Naive thymus-derived CD4-positive, alpha-beta T cell (primary cell): ENCODE measurements at regions of chr14 and their contacts with region 1.

Region 1: DNA sequence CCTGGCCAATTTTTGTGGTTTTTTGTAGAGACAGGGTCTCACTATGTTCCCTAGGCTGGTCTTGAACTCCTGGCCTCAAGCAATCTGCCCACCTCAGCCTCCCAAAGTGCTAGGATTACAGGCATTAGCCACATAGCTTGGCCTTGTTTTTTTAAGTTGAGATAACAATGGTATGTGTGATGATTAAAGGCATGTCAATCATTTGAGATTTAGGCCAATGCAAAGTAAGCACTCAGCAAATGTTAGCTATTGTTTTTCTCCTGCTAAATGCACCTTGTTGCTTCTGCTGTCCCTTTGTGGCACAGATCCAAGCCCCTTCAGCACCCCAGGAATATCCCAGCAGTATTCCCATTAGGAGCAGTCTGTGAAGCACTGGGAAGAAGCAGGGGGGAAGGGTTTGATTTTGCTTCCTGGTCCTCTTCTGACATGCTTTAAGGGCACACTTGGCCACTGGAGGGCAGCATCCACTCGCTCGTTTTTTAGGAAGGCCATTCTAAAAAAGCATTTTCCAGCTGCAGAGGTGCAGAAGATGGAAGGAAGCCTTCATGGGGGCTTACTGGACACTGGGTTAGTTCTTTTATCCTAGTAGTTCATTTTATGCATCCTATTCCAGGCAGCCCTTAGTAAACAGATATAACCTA is 70.2 kb upstream of the ZFP36L1 start:
- DNase-seq: peak; percentile 33 to 66 (median 53)
- ATAC-seq: peak; percentile 68
- H3K4me3 ChIP-seq: no peak overlapping the region
- H3K4me3 Mint-ChIP-seq: no peak overlapping the region
- H3K27ac ChIP-seq: no peak overlapping the region
- H3K27ac Mint-ChIP-seq: peak overlapping the region in 2 of 9 donors; percentile 15 to 48
- H3K4me1 ChIP-seq: no peaks in the 10 kb centered on the region
- H3K4me1 Mint-ChIP-seq: peaks cover 0 to 2% (median 0%) of the 10 kb centered on the region in 7 donors
- H3K27me3 ChIP-seq: no peaks in the 10 kb centered on the region
- H3K27me3 Mint-ChIP-seq: no peaks in the 10 kb centered on the region

Region 2: DNA sequence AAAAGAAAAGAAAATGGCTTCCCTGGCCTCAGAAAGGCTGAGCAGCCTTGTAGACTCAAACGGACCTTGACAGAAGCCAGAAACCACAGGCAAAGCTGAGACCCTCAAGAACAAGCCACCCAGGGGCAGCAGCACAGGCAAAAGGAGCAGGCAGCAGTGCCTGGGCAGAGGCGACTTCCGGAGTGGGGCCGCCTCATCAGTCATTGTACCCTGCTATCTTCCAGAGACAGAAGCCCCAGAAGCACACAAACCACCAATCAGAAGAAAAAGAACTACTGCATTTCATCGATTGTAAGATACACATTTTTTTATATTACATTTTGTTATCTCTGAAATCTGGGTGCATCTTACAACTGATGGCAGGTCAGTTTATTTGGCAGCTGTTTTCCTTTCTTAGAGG is 12.0 kb before region 1 on chr14:
- CTCF ChIA-PET with region 1: no interaction called
- POLR2A ChIA-PET with region 1: no interaction called
- intact Hi-C with region 1: no loop called
- DNase-seq: no peak
- ATAC-seq: no peak
- H3K4me3 ChIP-seq: no peak overlapping the region
- H3K4me3 Mint-ChIP-seq: no peak overlapping the region
- H3K27ac ChIP-seq: no peak overlapping the region
- H3K27ac Mint-ChIP-seq: no peak overlapping the region
- H3K4me1 ChIP-seq: no peaks in the 10 kb centered on the region
- H3K4me1 Mint-ChIP-seq: peaks cover 0 to 12% (median 0%) of the 10 kb centered on the region in 7 donors
- H3K27me3 ChIP-seq: no peaks in the 10 kb centered on the region
- H3K27me3 Mint-ChIP-seq: no peaks in the 10 kb centered on the region

Region 3: DNA sequence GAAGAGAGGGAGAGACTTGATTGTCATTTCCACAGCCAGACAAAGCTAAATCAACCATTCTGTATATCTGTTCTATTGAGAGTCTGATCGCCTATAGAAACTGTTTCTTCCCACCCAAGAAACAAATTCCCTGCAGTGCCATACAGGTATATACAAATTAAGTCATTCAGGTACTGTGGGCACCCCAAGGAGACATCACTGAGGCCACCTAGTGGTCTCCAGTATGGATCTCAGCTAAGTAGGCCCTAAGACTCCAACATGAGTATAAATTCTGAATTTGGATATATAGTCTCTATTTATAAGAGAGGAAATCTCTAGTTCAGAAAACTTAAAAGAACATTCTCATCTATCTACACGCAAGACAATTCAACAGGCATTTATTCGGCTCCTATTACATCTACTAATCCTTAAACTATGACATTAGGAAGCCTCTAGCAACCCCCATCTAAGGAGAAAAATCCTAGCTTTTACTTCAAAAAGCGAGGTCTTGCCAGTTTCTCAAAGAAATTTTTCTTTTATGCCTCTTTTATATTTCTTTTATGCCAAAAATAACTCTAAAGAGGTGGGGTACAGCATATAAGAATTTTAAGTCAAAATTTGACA is 227.2 kb after region 1 on chr14:
- CTCF ChIA-PET with region 1: interaction called, 3 read pairs
- POLR2A ChIA-PET with region 1: no interaction called
- intact Hi-C with region 1: loop called (anchors 1 kb)
- DNase-seq: peak in 7 of 9 donors; percentile 22 to 47 (median 40)
- ATAC-seq: peak; percentile 74
- H3K4me3 ChIP-seq: no peak overlapping the region
- H3K4me3 Mint-ChIP-seq: no peak overlapping the region
- H3K27ac ChIP-seq: no peak overlapping the region
- H3K27ac Mint-ChIP-seq: peak overlapping the region in 1 of 9 donors; percentile 31
- H3K4me1 ChIP-seq: no peaks in the 10 kb centered on the region
- H3K4me1 Mint-ChIP-seq: peaks cover 6 to 21% (median 12%) of the 10 kb centered on the region in 7 donors
- H3K27me3 ChIP-seq: no peaks in the 10 kb centered on the region
- H3K27me3 Mint-ChIP-seq: no peaks in the 10 kb centered on the region

Region 4: GRCh38 chr14:69107407-69108003 is 244.4 kb after region 1 on chr14:
- CTCF ChIA-PET with region 1: interaction called, 24 read pairs
- POLR2A ChIA-PET with region 1: no interaction called
- intact Hi-C with region 1: loop called (anchors 1 kb)
- DNase-seq: peak in 7 of 9 donors; percentile 31 to 59 (median 47)
- ATAC-seq: peak; percentile 67
- H3K4me3 ChIP-seq: no peak overlapping the region
- H3K4me3 Mint-ChIP-seq: no peak overlapping the region
- H3K27ac ChIP-seq: no peak overlapping the region
- H3K27ac Mint-ChIP-seq: peak overlapping the region in 1 of 9 donors; percentile 29
- H3K4me1 ChIP-seq: no peaks in the 10 kb centered on the region
- H3K4me1 Mint-ChIP-seq: peaks cover 2 to 18% (median 6%) of the 10 kb centered on the region in 7 donors
- H3K27me3 ChIP-seq: no peaks in the 10 kb centered on the region
- H3K27me3 Mint-ChIP-seq: no peaks in the 10 kb centered on the region

Region 5: DNA sequence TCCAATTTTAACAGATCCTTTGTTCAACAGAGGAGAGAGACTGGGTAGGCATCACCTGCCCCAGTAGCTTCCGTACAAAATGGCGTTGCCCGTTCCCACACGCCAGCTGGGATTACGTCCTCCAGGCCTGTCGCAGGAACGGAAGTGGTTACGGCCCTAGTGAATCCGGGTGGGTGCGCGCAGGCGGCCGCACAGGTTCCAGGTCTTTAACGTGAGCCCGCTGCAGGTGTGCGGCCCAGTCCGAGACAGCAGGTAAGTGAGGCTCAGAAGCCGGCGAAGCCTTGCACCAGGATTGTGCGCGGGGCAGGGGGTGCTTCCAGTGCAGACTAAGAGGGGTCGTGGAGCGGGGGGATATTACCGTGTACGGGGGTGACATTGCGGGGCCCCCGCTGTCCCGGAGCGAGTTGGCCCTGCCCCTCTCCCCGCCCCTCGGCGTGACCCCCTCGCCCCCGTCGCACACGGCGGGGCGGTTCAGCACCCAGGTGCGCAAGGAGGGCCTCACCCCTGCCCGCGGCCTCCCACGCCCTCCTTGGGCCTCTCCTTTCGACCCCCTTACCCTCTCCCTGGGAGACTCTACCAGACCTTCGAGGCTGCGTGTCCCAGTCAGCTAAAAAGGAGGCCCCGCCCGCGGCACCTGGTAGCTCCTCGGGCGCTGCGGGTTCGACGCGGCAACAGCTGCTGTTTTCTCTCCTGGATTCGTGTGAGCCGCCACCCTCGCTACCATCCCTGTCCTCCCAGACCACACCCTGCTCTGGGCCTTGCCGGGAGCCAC is 328.5 kb after region 1 on chr14 and contains the start of gene EXD2:
- CTCF ChIA-PET with region 1: no interaction called
- POLR2A ChIA-PET with region 1: no interaction called
- intact Hi-C with region 1: loop called in 1 of 2 experiments (anchors 2 kb)
- DNase-seq: peak; percentile 27 to 68 (median 61)
- ATAC-seq: peak; percentile 81
- H3K4me3 ChIP-seq: peak within 1 kb of the TSS; percentile 71
- H3K4me3 Mint-ChIP-seq: peak within 1 kb of the TSS; percentile 91 to 97 (median 94)
- H3K27ac ChIP-seq: peak within 1 kb of the TSS; percentile 70
- H3K27ac Mint-ChIP-seq: peak within 1 kb of the TSS; percentile 80 to 96 (median 92)
- H3K4me1 ChIP-seq: peaks cover 0 to 6% of the 10 kb centered on the region in 2 donors
- H3K4me1 Mint-ChIP-seq: peaks cover 16 to 44% (median 38%) of the 10 kb centered on the region in 7 donors
- H3K27me3 ChIP-seq: no peaks in the 10 kb centered on the region
- H3K27me3 Mint-ChIP-seq: peaks cover 0 to 14% (median 0%) of the 10 kb centered on the region in 5 donors
- total RNA-seq, gene EXD2: 4.8 to 17.2 (median 10.6) TPM

Region 6: GRCh38 chr14:69204753-69205152 is 341.7 kb after region 1 on chr14:
- CTCF ChIA-PET with region 1: no interaction called
- POLR2A ChIA-PET with region 1: no interaction called
- intact Hi-C with region 1: no loop called
- DNase-seq: no peak
- ATAC-seq: no peak
- H3K4me3 ChIP-seq: no peak overlapping the region
- H3K4me3 Mint-ChIP-seq: no peak overlapping the region
- H3K27ac ChIP-seq: no peak overlapping the region
- H3K27ac Mint-ChIP-seq: peak overlapping the region in 1 of 9 donors; percentile 2
- H3K4me1 ChIP-seq: no peaks in the 10 kb centered on the region
- H3K4me1 Mint-ChIP-seq: peaks cover 0 to 6% (median 2%) of the 10 kb centered on the region in 7 donors
- H3K27me3 ChIP-seq: no peaks in the 10 kb centered on the region
- H3K27me3 Mint-ChIP-seq: no peaks in the 10 kb centered on the region

Region 7: GRCh38 chr14:69242311-69243224 is 379.5 kb after region 1 on chr14:
- CTCF ChIA-PET with region 1: no interaction called
- POLR2A ChIA-PET with region 1: no interaction called
- intact Hi-C with region 1: loop called in 1 of 2 experiments (anchors 2 kb)
- DNase-seq: peak in 7 of 9 donors; percentile 23 to 61 (median 49)
- ATAC-seq: peak; percentile 78
- H3K4me3 ChIP-seq: no peak overlapping the region
- H3K4me3 Mint-ChIP-seq: no peak overlapping the region
- H3K27ac ChIP-seq: no peak overlapping the region
- H3K27ac Mint-ChIP-seq: peak overlapping the region in 1 of 9 donors; percentile 59
- H3K4me1 ChIP-seq: no peaks in the 10 kb centered on the region
- H3K4me1 Mint-ChIP-seq: peaks cover 0 to 4% (median 0%) of the 10 kb centered on the region in 7 donors
- H3K27me3 ChIP-seq: no peaks in the 10 kb centered on the region
- H3K27me3 Mint-ChIP-seq: no peaks in the 10 kb centered on the region